ENCODE measurements at regions of chr12 and their contacts with region 1.

Region 1: DNA sequence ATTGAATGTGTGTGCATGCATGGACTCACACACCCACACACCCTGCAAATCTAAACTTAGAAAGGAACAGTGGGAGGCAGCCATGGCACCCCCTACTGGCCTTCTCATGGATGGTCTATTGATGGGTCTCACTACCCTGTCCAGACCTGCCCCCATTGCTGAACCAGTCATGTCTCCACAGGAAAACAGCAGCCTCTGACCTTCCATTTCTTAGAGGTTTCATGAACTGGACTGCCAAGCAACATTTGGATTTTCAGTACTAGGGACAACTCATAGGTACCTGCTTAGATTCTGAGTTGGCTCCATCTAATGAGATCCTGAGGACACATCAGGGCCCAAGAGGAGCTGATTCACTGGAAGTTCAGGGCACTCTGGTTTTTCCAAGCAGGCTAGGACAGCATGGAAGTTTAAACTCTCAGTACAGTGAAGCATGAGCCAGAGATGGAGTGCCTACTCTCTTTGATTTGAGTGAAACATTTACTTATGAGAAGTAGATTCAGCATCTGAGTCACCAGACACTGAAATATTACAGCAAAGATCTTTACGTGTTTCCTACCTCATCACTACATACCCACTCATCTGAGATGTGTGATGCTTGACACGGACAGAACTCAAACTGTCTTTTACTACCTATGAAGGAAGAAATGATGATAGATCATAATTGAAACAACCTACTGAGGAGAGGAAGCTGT is 98.9 kb upstream of the PLEKHG7 start:
- DNase-seq: no peak
- ATAC-seq: no peak; the same call in 1 of the 3 replicates
- H3K4me3 ChIP-seq: no peak overlapping the region
- H3K27ac ChIP-seq: no peak overlapping the region
- H3K4me1 ChIP-seq: no peaks in the 10 kb centered on the region
- H3K27me3 ChIP-seq: no peaks in the 10 kb centered on the region
- CTCF ChIP-seq: no peak
- EP300 ChIP-seq: no peak
- POLR2A ChIP-seq: no peak
- RAD21 ChIP-seq: no peak

Region 2: DNA sequence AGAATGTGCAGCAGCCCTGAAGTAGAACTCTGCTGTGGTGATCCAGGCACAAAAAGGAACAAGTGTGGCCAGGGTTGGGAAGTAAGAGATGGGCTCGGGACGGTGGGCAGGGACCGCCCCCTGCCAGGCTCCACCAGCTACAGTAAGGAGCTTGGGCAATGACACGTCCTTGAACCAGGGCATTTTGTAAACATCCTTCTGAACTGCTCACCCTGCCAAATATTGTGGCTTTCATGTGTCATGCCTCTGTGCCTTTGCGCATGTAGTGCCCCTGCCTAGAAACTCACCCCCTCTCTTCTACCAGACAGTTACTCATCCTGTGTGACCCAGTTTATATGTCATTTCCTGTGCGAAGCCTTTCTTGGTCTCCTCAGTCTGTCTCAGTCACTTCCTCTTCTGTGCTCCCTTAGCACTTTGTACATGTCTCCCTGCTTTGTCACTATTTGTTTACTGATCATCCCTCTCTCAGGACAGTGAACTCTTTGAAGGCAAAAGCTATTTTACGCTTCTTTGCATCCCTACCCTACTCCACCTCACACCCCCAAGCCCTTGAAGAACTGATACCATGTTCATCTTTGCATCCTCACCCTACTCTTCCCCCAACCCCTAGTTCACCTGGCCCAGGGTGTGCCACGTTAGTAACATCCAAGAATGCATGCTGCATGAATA is 10.0 kb before region 1 on chr12:
- CTCF ChIA-PET with region 1: interaction called, 3 read pairs
- POLR2A ChIA-PET with region 1: interaction called, 3 read pairs
- RAD21 ChIA-PET with region 1: interaction called, 4 read pairs
- SMC1A ChIA-PET with region 1: interaction called, 12 read pairs
- in situ Hi-C with region 1: no loop called
- intact Hi-C with region 1: no loop called
- DNase-seq: peak; percentile 96
- ATAC-seq: peak; percentile 99
- H3K4me3 ChIP-seq: no peak overlapping the region
- H3K27ac ChIP-seq: peak overlapping the region; percentile 58
- H3K4me1 ChIP-seq: peaks cover 15% of the 10 kb centered on the region
- H3K27me3 ChIP-seq: no peaks in the 10 kb centered on the region
- CTCF ChIP-seq: no peak
- EP300 ChIP-seq: peak; percentile 93 to 96; a peak in 3 of 4 replicates
- POLR2A ChIP-seq: peak; percentile 57; the same call in 1 of the 2 replicates
- RAD21 ChIP-seq: no peak